Activated T-helper 1 cell treated with anti-CD3 and anti-CD28 coated beads, Interleukin-12 subunit alpha, Interleukin-12 subunit beta, Interleukin-2, Interleukin-4 antibody, amounts not matched to agents 30 ng/mL and 10 ng/mL and 1 ng/mL, durations not matched to agents 14 hours and 24 hours and 36 hours (primary cell): ENCODE measurements at regions of chr1 and their contacts with region 1.

Region 1: DNA sequence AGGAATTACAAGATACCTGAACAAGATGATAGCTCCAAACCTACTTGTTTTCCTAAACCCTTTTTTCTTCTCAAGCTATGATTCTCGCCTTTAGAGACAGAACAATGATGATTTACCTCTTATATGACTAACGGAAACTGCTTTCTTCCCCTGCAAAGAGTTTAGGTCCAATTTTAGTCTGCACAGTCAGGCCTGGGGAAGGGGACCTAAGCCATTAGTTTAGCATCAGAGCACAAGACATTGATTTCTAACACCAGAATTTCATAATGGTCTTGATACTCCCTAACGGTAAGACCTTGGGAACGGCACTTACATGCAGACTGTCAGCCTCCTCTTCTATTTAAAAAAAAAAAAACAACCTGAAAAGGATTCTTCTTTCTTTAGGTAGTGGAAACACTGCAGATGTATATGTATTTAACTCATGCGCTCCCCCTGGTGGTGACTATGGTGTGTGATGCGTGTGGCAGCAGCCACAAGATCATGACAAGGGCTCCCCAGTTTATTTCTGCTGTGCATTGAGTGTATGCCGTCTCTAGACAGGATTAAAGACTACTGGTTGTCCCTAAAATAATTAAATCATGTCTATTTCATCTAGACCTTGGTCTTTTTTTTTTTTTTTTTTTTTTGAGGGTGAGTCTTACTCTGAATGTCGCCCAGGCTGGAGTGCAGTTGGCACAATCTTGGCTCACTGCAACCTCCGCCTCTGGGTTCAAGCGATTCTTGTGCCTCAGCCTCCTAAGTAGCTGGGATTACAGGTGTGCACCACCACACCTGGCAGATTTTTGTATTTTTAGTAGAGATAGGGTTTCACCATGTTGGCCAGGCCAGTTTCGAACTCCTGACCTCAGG is 37.3 kb upstream of the TMEM222 start:
- DNase-seq: peak; percentile 74
- H3K4me3 Mint-ChIP-seq: no peak overlapping the region
- H3K27ac Mint-ChIP-seq: no peak overlapping the region
- H3K4me1 Mint-ChIP-seq: peaks cover 6% of the 10 kb centered on the region
- H3K27me3 Mint-ChIP-seq: peaks cover 4% of the 10 kb centered on the region

Region 2: GRCh38 chr1:27053977-27054753 is 230.5 kb before region 1 on chr1:
- intact Hi-C with region 1: no loop called
- DNase-seq: no peak
- H3K4me3 Mint-ChIP-seq: no peak overlapping the region
- H3K27ac Mint-ChIP-seq: no peak overlapping the region
- H3K4me1 Mint-ChIP-seq: no peaks in the 10 kb centered on the region
- H3K27me3 Mint-ChIP-seq: peaks cover 4% of the 10 kb centered on the region

Region 3: GRCh38 chr1:27102707-27103491 is 181.8 kb before region 1 on chr1:
- intact Hi-C with region 1: loop called (anchors 1 kb)
- DNase-seq: peak; percentile 69
- H3K4me3 Mint-ChIP-seq: no peak overlapping the region
- H3K27ac Mint-ChIP-seq: no peak overlapping the region
- H3K4me1 Mint-ChIP-seq: peaks cover 17% of the 10 kb centered on the region
- H3K27me3 Mint-ChIP-seq: no peaks in the 10 kb centered on the region

Region 4: GRCh38 chr1:27227765-27228164 is 56.9 kb before region 1 on chr1:
- intact Hi-C with region 1: no loop called
- DNase-seq: no peak
- H3K4me3 Mint-ChIP-seq: no peak overlapping the region
- H3K27ac Mint-ChIP-seq: no peak overlapping the region
- H3K4me1 Mint-ChIP-seq: no peaks in the 10 kb centered on the region
- H3K27me3 Mint-ChIP-seq: no peaks in the 10 kb centered on the region